ENCODE measurements at regions of chr5 and their contacts with region 1.

Region 1: DNA sequence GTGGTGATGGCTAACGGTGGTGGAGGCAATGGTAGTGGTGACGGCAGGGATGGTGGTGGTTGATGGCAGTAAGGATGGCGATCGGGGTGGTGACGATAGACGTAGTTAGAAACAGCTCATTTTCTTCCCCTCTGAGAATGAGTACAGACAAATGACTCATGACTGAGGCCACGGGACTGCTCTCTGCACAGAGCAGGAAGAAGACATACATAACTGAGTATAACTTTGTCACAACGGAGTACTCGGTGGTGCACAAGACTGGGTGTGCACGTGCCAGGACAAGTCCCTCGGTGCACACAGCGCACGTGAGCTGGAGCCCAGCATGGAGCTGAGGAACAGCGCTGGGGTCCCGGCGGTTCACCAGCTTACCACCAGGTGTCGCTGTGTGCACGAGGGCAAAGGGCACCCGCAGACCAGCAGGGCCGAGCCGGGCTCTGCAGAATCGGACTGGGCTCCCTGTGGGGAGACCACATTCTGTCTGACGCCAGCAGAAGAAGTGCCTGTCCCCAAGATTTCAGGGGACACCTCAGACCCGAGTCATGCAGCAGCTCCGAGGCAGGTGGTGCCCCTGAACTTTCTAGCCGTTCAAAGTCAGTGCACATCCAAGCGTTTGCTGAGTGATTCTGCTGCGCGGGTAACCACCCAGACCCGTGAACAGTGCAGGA is 188.6 kb downstream of the FSTL4 start:
- DNase-seq: peak; percentile 38 to 84 (median 65)
- ATAC-seq: peak; percentile 50 to 89 (median 79)
- H3K4me3 ChIP-seq: no peak overlapping the region
- H3K27ac ChIP-seq: no peak overlapping the region
- H3K4me1 ChIP-seq: peaks cover 0 to 5% (median 0%) of the 10 kb centered on the region in 12 donors
- H3K27me3 ChIP-seq: peaks cover 0 to 16% (median 0%) of the 10 kb centered on the region in 9 donors
- CTCF ChIP-seq: peak; percentile 80 to 95 (median 92)
- POLR2A ChIP-seq: no peak

Region 2: DNA sequence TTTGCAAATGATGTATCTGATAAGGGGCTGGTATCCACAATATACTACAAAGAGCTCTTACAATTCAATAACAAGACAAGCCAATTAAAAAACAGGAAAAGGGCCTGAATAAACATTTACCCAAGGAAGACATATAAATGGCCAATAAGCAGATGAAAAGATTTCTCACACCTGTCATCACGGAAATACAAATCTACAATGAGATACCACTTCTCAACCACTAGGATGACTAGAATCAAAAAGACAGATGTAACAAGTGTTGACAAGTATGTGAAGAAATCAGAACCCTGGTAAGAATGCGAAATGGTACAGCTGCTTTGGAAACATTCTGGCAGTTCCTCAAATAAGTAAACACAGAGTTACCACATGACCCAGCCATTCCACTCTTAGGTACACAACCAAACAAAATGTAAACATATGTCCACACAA is 517.9 kb before region 1 on chr5:
- intact Hi-C with region 1: no loop called
- DNase-seq: no peak
- ATAC-seq: peak in 2 of 4 donors; percentile 28 to 32
- H3K4me3 ChIP-seq: no peak overlapping the region
- H3K27ac ChIP-seq: no peak overlapping the region
- H3K4me1 ChIP-seq: peaks cover 0 to 23% (median 3%) of the 10 kb centered on the region in 12 donors
- H3K27me3 ChIP-seq: no peaks in the 10 kb centered on the region
- CTCF ChIP-seq: no peak
- POLR2A ChIP-seq: no peak

Region 3: DNA sequence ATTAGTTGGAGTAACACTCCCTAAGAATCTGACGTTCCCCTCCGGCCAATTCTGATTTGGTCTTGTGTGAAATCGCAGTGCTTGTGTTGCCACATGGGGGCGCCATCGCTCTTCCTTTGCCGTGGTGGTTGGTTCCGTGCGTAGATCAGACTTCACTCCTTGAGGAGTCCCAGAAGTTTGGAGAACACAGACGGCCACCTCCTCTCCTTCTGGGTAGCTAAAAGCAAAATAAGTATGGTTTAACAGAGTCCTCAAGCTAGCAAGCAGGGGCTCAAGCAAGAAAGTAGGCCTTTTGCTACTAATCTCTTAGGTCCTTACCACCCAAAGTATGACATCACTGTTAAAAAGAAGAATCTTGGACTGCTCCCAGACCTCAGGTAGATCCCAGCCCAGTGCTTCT is 312.5 kb before region 1 on chr5:
- intact Hi-C with region 1: loop called in 1 of 10 experiments (anchors 5 kb)
- DNase-seq: peak; percentile 75 to 90 (median 79)
- ATAC-seq: peak; percentile 39 to 80 (median 70)
- H3K4me3 ChIP-seq: no peak overlapping the region
- H3K27ac ChIP-seq: no peak overlapping the region
- H3K4me1 ChIP-seq: peaks cover 0 to 8% (median 0%) of the 10 kb centered on the region in 12 donors
- H3K27me3 ChIP-seq: no peaks in the 10 kb centered on the region
- CTCF ChIP-seq: peak; percentile 81 to 92 (median 88)
- POLR2A ChIP-seq: no peak

Region 4: DNA sequence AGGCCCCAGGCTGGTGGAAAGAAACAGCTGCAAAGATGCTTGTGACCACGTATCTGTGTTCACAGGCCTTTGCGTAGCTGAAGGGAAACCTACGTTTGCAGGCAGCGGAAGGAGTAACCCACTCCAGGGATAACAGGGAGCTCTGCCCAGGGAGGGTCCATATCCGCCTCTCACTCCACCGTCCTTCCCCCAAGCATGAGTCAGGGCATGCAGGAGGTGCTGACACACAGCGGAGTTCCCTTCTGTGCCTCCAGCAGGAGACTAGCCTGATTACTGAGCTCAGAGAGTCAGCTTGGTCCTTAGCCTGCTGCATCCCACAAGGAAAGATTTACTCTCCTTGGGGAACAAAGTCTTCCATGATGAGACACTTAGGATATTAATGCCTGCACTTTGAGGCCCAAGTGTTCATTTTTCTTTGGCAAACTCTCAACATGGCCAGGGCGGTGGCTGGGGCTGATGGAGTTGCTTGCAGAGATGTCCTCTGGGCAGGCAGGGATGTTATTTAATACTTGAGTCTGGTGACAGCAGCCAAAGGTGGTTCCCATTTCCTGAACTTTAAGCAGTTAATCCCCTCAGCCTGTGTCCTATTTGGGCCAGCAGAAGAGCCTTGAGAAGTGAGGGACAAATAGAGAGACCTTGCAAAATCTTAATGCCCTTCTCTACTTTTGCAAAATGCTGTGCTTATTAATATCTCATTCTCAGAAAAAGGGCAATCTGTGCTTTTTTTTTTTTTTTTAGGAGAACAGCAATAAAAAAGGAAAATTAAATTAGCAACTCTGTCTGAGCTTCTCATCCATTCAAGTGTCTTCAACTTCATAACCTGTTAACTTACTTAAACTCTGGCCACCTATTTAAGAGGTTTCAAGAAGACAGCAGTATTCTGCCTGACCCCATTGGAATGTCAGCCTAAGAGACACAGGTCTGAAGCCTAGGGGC is 149.8 kb before region 1 on chr5:
- intact Hi-C with region 1: no loop called
- DNase-seq: no peak
- ATAC-seq: peak in 2 of 4 donors; percentile 34 to 52
- H3K4me3 ChIP-seq: no peak overlapping the region
- H3K27ac ChIP-seq: no peak overlapping the region
- H3K4me1 ChIP-seq: no peaks in the 10 kb centered on the region
- H3K27me3 ChIP-seq: no peaks in the 10 kb centered on the region
- CTCF ChIP-seq: no peak
- POLR2A ChIP-seq: no peak

Region 5: GRCh38 chr5:133353741-133354140 is 70.0 kb before region 1 on chr5:
- intact Hi-C with region 1: no loop called
- DNase-seq: no peak
- ATAC-seq: peak in 2 of 4 donors; percentile 43 to 66
- H3K4me3 ChIP-seq: no peak overlapping the region
- H3K27ac ChIP-seq: no peak overlapping the region
- H3K4me1 ChIP-seq: no peaks in the 10 kb centered on the region
- H3K27me3 ChIP-seq: peaks cover 0 to 10% (median 0%) of the 10 kb centered on the region in 9 donors
- CTCF ChIP-seq: no peak
- POLR2A ChIP-seq: no peak

Region 6: GRCh38 chr5:133610489-133611356 is 187.0 kb after region 1 on chr5:
- intact Hi-C with region 1: loop called (anchors 2 to 5 kb)
- DNase-seq: peak; percentile 52 to 80 (median 66)
- ATAC-seq: peak; percentile 59 to 98 (median 94)
- H3K4me3 ChIP-seq: peak overlapping the region in 9 of 12 donors; percentile 17 to 46 (median 38)
- H3K27ac ChIP-seq: no peak overlapping the region
- H3K4me1 ChIP-seq: peaks cover 10 to 31% (median 16%) of the 10 kb centered on the region in 12 donors
- H3K27me3 ChIP-seq: peaks cover 12 to 88% (median 48%) of the 10 kb centered on the region in 9 donors
- CTCF ChIP-seq: peak; percentile 16 to 71 (median 56)
- POLR2A ChIP-seq: no peak

Region 7: DNA sequence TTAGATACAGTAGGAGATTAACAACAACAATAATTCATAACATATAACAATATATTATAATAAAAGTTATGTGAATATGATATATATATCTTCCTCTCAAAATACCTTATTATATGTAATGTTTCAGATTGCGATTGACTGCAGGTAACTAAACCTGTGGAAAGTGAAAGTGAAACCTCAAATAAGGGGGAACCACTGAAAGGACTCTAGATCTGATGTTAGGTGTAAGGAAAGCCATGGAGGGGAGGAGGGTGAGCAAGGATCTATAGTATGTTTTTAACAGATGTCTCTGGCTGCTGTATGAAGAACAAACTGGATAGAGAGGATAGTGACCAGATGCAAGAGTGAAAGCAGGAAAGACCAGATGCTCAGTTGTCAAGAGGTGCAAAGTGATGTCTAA is 194.4 kb after region 1 on chr5:
- intact Hi-C with region 1: loop called in 7 of 10 experiments (anchors 5 kb)
- DNase-seq: no peak
- ATAC-seq: no peak
- H3K4me3 ChIP-seq: no peak overlapping the region
- H3K27ac ChIP-seq: no peak overlapping the region
- H3K4me1 ChIP-seq: peaks cover 0 to 4% (median 0%) of the 10 kb centered on the region in 12 donors
- H3K27me3 ChIP-seq: peaks cover 0 to 36% (median 8%) of the 10 kb centered on the region in 9 donors
- CTCF ChIP-seq: no peak
- POLR2A ChIP-seq: no peak

Region 8: DNA sequence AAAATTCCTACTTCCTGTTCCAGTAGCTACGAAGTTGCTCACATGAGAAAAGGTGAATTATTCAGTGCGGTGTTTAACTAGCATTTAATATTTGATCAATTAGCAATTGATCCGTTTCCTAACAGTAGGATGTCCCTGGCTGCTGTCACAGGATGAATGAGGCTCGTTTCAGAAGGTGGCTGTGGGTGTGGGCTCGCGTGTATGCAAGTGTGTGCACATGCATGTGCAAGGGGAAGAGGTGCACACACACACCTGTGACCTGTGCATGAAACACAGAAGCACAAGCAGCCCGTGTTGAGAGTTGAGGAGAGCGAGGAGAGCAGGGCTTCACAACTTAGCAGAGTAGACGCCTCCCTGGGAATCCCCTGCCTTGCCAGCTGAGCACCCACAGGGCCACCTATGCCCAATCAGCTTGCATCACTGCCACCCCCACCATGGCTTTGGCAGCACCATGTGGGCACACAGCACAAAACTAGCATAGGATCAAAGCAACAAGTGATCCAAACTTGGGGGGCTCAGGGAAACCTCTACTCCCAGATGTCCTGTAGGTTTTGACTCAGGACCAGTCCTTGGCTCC is 437.5 kb after region 1 on chr5:
- intact Hi-C with region 1: loop called in 7 of 10 experiments (anchors 5 to 10 kb)
- DNase-seq: no peak
- ATAC-seq: no peak
- H3K4me3 ChIP-seq: no peak overlapping the region
- H3K27ac ChIP-seq: no peak overlapping the region
- H3K4me1 ChIP-seq: no peaks in the 10 kb centered on the region
- H3K27me3 ChIP-seq: no peaks in the 10 kb centered on the region
- CTCF ChIP-seq: no peak
- POLR2A ChIP-seq: no peak

Region 9: GRCh38 chr5:133930061-133930812 is 506.5 kb after region 1 on chr5:
- intact Hi-C with region 1: loop called in 1 of 10 experiments (anchors 10 kb)
- DNase-seq: peak in 1 of 5 donors; percentile 17
- ATAC-seq: peak in 2 of 4 donors; percentile 48 to 57
- H3K4me3 ChIP-seq: peak overlapping the region in 1 of 12 donors; percentile 10
- H3K27ac ChIP-seq: peak overlapping the region in 1 of 12 donors; percentile 58
- H3K4me1 ChIP-seq: peaks cover 0 to 34% (median 0%) of the 10 kb centered on the region in 12 donors
- H3K27me3 ChIP-seq: peaks cover 0 to 5% (median 0%) of the 10 kb centered on the region in 9 donors
- CTCF ChIP-seq: no peak
- POLR2A ChIP-seq: no peak

Region 10: GRCh38 chr5:133944263-133945185 is 520.8 kb after region 1 on chr5:
- intact Hi-C with region 1: loop called in 6 of 10 experiments (anchors 1 to 10 kb)
- DNase-seq: peak in 2 of 5 donors; percentile 35 to 41
- ATAC-seq: peak in 3 of 4 donors; percentile 61 to 70 (median 67)
- H3K4me3 ChIP-seq: no peak overlapping the region
- H3K27ac ChIP-seq: no peak overlapping the region
- H3K4me1 ChIP-seq: peaks cover 0 to 8% (median 0%) of the 10 kb centered on the region in 12 donors
- H3K27me3 ChIP-seq: no peaks in the 10 kb centered on the region
- CTCF ChIP-seq: peak; percentile 36 to 66 (median 52)
- POLR2A ChIP-seq: no peak

Measured in heart left ventricle (tissue), 16 donors.